Activated B cell treated with CpG ODN at 0.5 μM for 24 hours (primary cell): ENCODE measurements at regions of chr1 and their contacts with region 1.

Region 1: GRCh38 chr1:9629445-9630201 is 21.9 kb upstream of the PIK3CD start:
- DNase-seq: peak; percentile 70
- ATAC-seq: peak; percentile 43
- H3K4me3 Mint-ChIP-seq: peak overlapping the region; percentile 88
- H3K27ac Mint-ChIP-seq: peak overlapping the region; percentile 87
- H3K4me1 Mint-ChIP-seq: peaks cover 77% of the 10 kb centered on the region
- H3K27me3 Mint-ChIP-seq: no peaks in the 10 kb centered on the region
- CTCF ChIP-seq: no peak

Region 2: GRCh38 chr1:9588551-9589143 is 41.0 kb before region 1 on chr1 and contains the start of gene TMEM201:
- CTCF ChIA-PET with region 1: interaction called, 5 read pairs
- POLR2A ChIA-PET with region 1: interaction called, 9 read pairs
- intact Hi-C with region 1: loop called (anchors 1 kb)
- DNase-seq: peak; percentile 98
- ATAC-seq: peak; percentile 91
- H3K4me3 Mint-ChIP-seq: peak within 1 kb of the TSS; percentile 84
- H3K27ac Mint-ChIP-seq: peak within 1 kb of the TSS; percentile 12
- H3K4me1 Mint-ChIP-seq: peaks cover 38% of the 10 kb centered on the region
- H3K27me3 Mint-ChIP-seq: no peaks in the 10 kb centered on the region
- CTCF ChIP-seq: no peak
- total RNA-seq, gene TMEM201: 8.1 and 9.4 TPM in 2 replicates

Region 3: DNA sequence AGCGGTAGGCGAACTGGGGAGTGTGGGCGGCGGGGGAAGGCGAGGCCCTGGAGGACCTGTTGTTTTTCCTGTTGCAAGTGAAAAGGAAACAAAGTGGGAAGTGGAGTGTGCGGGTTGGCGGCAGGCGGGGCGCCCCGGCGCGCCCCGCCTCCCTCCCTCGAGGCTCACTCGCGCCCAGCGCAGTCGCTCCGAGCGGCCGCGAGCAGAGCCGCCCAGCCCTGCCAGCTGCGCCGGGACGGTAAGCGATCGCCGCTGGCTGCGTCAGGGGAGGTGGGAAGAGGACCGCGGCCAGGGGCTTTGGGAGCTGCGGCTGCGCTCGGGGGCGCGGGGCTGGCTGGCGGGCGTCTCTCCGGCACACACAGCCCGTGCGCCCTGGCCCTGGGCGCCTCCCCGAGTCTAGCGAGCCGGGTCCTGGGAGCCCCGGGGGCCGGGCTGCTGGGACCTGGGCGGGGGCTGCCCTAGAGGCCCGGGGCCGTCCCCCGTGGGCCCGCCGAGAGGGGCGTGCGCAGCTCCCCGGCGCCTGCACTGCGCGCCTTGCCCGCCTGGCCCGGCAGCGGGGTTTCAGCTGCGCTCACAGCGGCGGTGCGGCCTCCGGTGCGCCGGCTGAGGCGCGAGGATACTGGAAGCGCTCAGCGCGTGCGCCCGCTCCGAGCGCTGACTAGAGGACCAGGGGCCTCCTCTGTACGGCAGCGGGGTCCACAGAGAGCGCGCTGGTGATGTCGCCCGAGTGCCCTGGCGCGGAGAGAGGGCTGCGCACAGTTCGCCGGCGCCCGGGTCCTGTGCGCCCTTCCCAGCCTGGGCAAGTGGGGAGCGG is 22.1 kb after region 1 on chr1 and contains the start of gene PIK3CD:
- CTCF ChIA-PET with region 1: interaction called, 125 read pairs
- POLR2A ChIA-PET with region 1: interaction called, 699 read pairs
- intact Hi-C with region 1: loop called (anchors 1 kb)
- DNase-seq: peak; percentile 50
- ATAC-seq: peak; percentile 11
- H3K4me3 Mint-ChIP-seq: peak within 1 kb of the TSS; percentile 96
- H3K27ac Mint-ChIP-seq: peak within 1 kb of the TSS; percentile 99
- H3K4me1 Mint-ChIP-seq: peaks cover 52% of the 10 kb centered on the region
- H3K27me3 Mint-ChIP-seq: no peaks in the 10 kb centered on the region
- CTCF ChIP-seq: no peak
- total RNA-seq, gene PIK3CD: 238 and 265 TPM in 2 replicates

Region 4: GRCh38 chr1:9676815-9677393 is 47.3 kb after region 1 on chr1:
- CTCF ChIA-PET with region 1: interaction called, 12 read pairs
- POLR2A ChIA-PET with region 1: interaction called, 25 read pairs
- intact Hi-C with region 1: no loop called
- DNase-seq: no peak
- ATAC-seq: no peak
- H3K4me3 Mint-ChIP-seq: peak overlapping the region; percentile 15
- H3K27ac Mint-ChIP-seq: peak overlapping the region; percentile 38
- H3K4me1 Mint-ChIP-seq: peaks cover 71% of the 10 kb centered on the region
- H3K27me3 Mint-ChIP-seq: no peaks in the 10 kb centered on the region
- CTCF ChIP-seq: no peak

Region 5: GRCh38 chr1:9705337-9706093 is 75.9 kb after region 1 on chr1:
- CTCF ChIA-PET with region 1: interaction called, 10 read pairs
- POLR2A ChIA-PET with region 1: interaction called, 4 read pairs
- intact Hi-C with region 1: loop called (anchors 5 kb)
- DNase-seq: no peak
- ATAC-seq: no peak
- H3K4me3 Mint-ChIP-seq: no peak overlapping the region
- H3K27ac Mint-ChIP-seq: peak overlapping the region; percentile 6
- H3K4me1 Mint-ChIP-seq: peaks cover 57% of the 10 kb centered on the region
- H3K27me3 Mint-ChIP-seq: no peaks in the 10 kb centered on the region
- CTCF ChIP-seq: no peak

Region 6: DNA sequence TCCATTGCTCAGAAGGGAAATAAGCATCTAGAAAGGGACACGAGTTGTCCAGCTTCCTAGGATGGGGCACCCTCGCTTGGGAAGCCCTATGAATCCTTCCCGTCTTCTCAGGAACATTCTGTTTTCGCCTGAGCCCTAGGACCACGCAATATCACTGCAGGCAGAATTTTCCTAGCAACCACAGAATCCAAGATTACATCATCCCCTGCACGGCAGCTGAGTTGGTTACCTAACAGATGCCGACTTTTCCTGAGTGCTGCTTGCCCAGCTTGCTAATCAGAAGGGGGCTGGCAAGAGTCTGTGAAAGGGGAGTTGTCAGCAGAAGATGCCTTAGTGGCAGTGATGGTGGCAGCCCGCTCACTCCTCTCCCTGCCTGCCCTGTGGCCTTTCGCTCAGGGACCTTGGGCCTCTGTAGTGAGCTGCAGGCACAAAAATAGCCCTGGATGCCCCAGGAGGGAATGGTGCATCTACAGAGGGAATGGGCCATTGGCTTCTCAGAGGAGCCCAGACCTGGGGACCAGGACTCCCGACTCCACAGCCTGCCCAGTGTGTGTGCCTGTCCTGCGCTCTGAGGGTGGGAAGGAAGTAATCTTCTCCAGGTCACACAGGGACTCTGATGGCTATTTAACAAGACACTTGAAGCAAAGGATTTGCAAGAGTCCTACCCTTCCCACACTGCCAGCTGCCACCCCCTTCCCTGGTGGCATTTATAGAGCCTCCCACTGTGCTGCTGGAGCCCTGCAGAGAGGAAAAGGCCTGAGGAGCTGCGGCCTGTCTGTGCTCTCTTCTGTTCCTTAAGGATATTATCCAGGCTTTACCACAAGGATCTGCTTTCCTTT is 223.0 kb after region 1 on chr1:
- CTCF ChIA-PET with region 1: interaction called, 4 read pairs
- POLR2A ChIA-PET with region 1: interaction called, 5 read pairs
- intact Hi-C with region 1: loop called (anchors 5 kb)
- DNase-seq: no peak
- ATAC-seq: no peak
- H3K4me3 Mint-ChIP-seq: no peak overlapping the region
- H3K27ac Mint-ChIP-seq: no peak overlapping the region
- H3K4me1 Mint-ChIP-seq: peaks cover 31% of the 10 kb centered on the region
- H3K27me3 Mint-ChIP-seq: no peaks in the 10 kb centered on the region
- CTCF ChIP-seq: no peak